Activated CD4-positive, alpha-beta memory T cell treated with anti-CD3 and anti-CD28 coated beads, Interleukin-2, amount 10 ng/mL, durations not matched to agents 7 days and 5 days (primary cell): ENCODE measurements at regions of chr17 and their contacts with region 1.

Region 1: GRCh38 chr17:4565209-4566141 is 5.1 kb upstream of the GGT6 start:
- DNase-seq: peak; percentile 59
- H3K4me3 Mint-ChIP-seq: no peak overlapping the region
- H3K27ac Mint-ChIP-seq: no peak overlapping the region
- H3K4me1 Mint-ChIP-seq: peaks cover 34% of the 10 kb centered on the region
- H3K27me3 Mint-ChIP-seq: peaks cover 12% of the 10 kb centered on the region

Region 2: DNA sequence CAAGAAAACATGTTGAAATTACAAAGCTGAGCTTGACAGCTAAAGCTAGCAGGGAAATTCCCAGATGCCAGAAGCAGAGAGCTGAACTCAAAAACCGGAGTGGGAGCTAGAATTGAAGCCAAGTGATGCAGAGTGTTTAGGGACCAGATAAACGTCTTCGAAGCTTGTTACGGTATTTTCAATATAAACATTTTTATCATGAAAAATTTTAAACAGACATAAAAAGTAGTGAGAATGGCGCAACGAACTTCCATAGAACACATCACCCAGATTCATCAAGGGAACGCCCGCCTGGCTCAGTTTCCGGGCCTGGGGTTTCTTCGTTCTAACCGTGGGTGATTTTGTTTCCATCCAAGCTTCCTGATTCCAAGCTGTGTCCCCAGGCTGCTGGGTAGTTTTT is 48.7 kb before region 1 on chr17:
- CTCF ChIA-PET with region 1: no interaction called
- POLR2A ChIA-PET with region 1: no interaction called
- DNase-seq: no peak
- H3K4me3 Mint-ChIP-seq: no peak overlapping the region
- H3K27ac Mint-ChIP-seq: no peak overlapping the region
- H3K4me1 Mint-ChIP-seq: peaks cover 7% of the 10 kb centered on the region
- H3K27me3 Mint-ChIP-seq: peaks cover 2% of the 10 kb centered on the region

Region 3: GRCh38 chr17:4530799-4531730 is 34.4 kb before region 1 on chr17:
- CTCF ChIA-PET with region 1: no interaction called
- POLR2A ChIA-PET with region 1: no interaction called
- DNase-seq: no peak
- H3K4me3 Mint-ChIP-seq: no peak overlapping the region
- H3K27ac Mint-ChIP-seq: no peak overlapping the region
- H3K4me1 Mint-ChIP-seq: no peaks in the 10 kb centered on the region
- H3K27me3 Mint-ChIP-seq: peaks cover 13% of the 10 kb centered on the region

Region 4: GRCh38 chr17:4554997-4555799 is 10.3 kb before region 1 on chr17 and contains the start of gene MYBBP1A:
- CTCF ChIA-PET with region 1: interaction called, 42 read pairs
- POLR2A ChIA-PET with region 1: interaction called, 22 read pairs
- DNase-seq: peak; percentile 97
- H3K4me3 Mint-ChIP-seq: peak within 1 kb of the TSS; percentile 84
- H3K27ac Mint-ChIP-seq: peak within 1 kb of the TSS; percentile 87
- H3K4me1 Mint-ChIP-seq: peaks cover 30% of the 10 kb centered on the region
- H3K27me3 Mint-ChIP-seq: no peaks in the 10 kb centered on the region
- total RNA-seq, gene MYBBP1A: 36.7 to 37.7 TPM

Region 5: GRCh38 chr17:4576729-4577322 is 11.4 kb after region 1 on chr17:
- CTCF ChIA-PET with region 1: interaction called, 16 read pairs
- POLR2A ChIA-PET with region 1: no interaction called
- DNase-seq: no peak
- H3K4me3 Mint-ChIP-seq: no peak overlapping the region
- H3K27ac Mint-ChIP-seq: no peak overlapping the region
- H3K4me1 Mint-ChIP-seq: peaks cover 13% of the 10 kb centered on the region
- H3K27me3 Mint-ChIP-seq: peaks cover 8% of the 10 kb centered on the region

Region 6: GRCh38 chr17:4582101-4582501 is 16.6 kb after region 1 on chr17:
- CTCF ChIA-PET with region 1: interaction called, 16 read pairs
- POLR2A ChIA-PET with region 1: no interaction called
- DNase-seq: no peak
- H3K4me3 Mint-ChIP-seq: no peak overlapping the region
- H3K27ac Mint-ChIP-seq: no peak overlapping the region
- H3K4me1 Mint-ChIP-seq: peaks cover 1% of the 10 kb centered on the region
- H3K27me3 Mint-ChIP-seq: peaks cover 46% of the 10 kb centered on the region

Region 7: DNA sequence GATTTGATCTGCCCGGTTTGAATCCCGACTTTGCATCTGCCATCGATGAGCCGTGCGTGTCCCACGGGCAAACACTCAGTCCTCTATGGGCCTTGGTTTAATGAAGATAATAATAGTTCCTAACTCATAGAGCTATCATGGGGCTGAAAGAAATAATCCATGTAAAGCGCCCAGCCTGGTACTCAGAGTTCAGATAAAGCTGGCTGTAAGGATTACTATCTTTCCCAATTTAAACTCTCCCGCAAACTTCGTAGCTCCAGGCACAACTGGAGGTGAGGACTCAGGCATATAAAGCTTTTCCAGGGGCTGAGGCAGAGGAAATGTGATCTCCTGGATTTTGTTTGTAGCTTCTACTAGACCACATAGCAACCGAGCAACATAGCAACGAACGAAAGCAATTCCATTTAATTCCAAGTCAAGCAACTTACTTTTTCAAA is 59.7 kb after region 1 on chr17:
- CTCF ChIA-PET with region 1: interaction called, 44 read pairs
- POLR2A ChIA-PET with region 1: no interaction called
- DNase-seq: no peak
- H3K4me3 Mint-ChIP-seq: no peak overlapping the region
- H3K27ac Mint-ChIP-seq: no peak overlapping the region
- H3K4me1 Mint-ChIP-seq: peaks cover 3% of the 10 kb centered on the region
- H3K27me3 Mint-ChIP-seq: peaks cover 34% of the 10 kb centered on the region

Region 8: DNA sequence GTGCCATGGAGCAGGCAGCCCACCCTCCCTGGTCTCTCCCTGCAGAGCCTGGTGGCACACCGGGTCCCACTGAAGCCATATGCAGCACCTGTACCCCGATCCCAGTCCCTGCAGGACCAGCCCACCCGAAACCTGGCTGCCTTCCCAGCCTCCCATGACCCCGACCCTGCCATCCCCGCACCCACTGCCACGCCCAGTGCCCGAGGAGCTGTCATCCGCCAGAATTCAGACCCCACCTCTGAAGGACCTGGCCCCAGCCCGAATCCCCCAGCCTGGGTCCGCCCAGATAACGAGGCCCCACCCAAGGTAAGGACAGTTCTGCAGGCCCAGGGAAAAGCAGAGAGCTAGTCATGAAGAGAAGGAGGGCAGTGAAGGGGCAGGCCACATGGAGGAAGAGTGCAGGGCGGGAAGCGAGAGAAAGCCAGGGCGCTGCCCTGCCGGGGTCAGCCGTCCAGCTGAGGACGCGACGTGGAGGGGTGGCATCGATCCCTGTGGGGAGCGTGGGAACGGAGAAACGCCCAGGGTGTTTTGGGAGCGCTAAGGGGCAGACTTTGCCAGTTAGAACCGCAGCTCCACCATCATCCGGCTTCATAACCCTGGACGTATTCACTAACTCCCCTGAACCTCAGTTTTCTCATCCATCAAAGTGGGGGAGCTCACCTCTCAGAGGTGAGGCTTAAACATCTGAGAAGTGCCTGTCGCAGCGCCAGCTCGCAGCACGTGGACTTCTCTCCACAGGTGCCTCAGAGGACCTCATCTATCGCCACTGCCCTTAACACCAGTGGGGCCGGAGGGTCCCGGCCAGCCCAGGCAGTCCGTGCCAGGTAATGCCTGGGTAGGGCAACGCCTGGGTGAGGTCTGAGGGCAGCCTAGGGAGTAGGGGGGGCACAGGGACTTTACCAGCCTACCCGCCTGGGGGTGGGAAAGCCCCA is 326.2 kb after region 1 on chr17:
- CTCF ChIA-PET with region 1: interaction called, 12 read pairs
- POLR2A ChIA-PET with region 1: no interaction called
- DNase-seq: no peak
- H3K4me3 Mint-ChIP-seq: no peak overlapping the region
- H3K27ac Mint-ChIP-seq: no peak overlapping the region
- H3K4me1 Mint-ChIP-seq: peaks cover 2% of the 10 kb centered on the region
- H3K27me3 Mint-ChIP-seq: no peaks in the 10 kb centered on the region